ENCODE measurements at regions of chr19 and their contacts with region 1.

Region 1: DNA sequence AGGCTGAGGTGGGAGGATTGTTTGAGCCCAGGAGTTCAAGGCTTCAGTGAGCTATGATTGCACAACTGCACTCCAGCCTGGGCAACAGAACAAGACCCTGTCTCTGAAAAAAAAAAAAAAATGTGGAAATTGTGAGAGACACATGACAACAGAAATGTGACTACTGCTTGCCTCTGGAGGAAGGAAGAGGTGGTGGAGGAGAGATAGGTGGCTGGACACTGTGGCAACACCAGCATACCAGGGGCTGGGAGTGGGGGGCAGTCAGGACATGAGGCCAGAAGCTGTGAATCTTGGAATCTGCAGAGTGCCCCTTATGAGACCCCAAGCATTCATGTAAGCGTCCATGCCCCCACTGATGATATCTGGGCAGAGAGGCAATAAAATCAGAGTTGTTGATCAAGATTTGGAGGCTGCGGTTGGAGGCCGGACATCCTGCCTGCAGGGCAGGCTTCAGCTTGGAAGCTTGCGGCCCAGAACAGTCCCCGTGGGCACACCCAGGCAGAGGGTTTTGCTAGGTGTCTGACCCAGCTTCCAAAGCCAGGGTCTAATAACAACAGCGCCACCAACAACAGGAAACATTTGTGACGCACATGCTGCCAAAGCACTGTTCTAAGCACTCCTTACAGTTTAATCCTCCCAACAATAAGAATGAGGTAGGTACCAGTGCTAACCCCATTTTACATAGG is 16.9 kb downstream of the FAM187B start:
- DNase-seq: peak; percentile 74 to 93 (median 91)
- H3K4me3 ChIP-seq: peak overlapping the region; percentile 36
- H3K4me3 Mint-ChIP-seq: peak overlapping the region; percentile 66 to 89 (median 78)
- H3K27ac ChIP-seq: peak overlapping the region; percentile 86
- H3K27ac Mint-ChIP-seq: peak overlapping the region; percentile 98 to 100 (median 99)
- H3K4me1 ChIP-seq: peaks cover 86% of the 10 kb centered on the region
- H3K4me1 Mint-ChIP-seq: peaks cover 69 to 86% (median 85%) of the 10 kb centered on the region in 3 donors
- H3K27me3 ChIP-seq: no peaks in the 10 kb centered on the region
- H3K27me3 Mint-ChIP-seq: peaks cover 0 to 6% of the 10 kb centered on the region in 2 donors

Region 2: GRCh38 chr19:35154525-35155406 is 56.9 kb before region 1 on chr19 and contains the start of gene FXYD5:
- CTCF ChIA-PET with region 1: interaction called, 8 read pairs
- POLR2A ChIA-PET with region 1: interaction called, 28 read pairs
- DNase-seq: peak; percentile 58 to 77 (median 62)
- H3K4me3 ChIP-seq: peak within 1 kb of the TSS; percentile 92
- H3K4me3 Mint-ChIP-seq: peak within 1 kb of the TSS; percentile 96 to 100 (median 99)
- H3K27ac ChIP-seq: peak within 1 kb of the TSS; percentile 91
- H3K27ac Mint-ChIP-seq: peak within 1 kb of the TSS; percentile 91 to 100 (median 98)
- H3K4me1 ChIP-seq: peaks cover 37% of the 10 kb centered on the region
- H3K4me1 Mint-ChIP-seq: peaks cover 49 to 52% (median 49%) of the 10 kb centered on the region in 3 donors
- H3K27me3 ChIP-seq: no peaks in the 10 kb centered on the region
- H3K27me3 Mint-ChIP-seq: no peaks in the 10 kb centered on the region
- total RNA-seq, gene FXYD5: 295 TPM

Region 3: DNA sequence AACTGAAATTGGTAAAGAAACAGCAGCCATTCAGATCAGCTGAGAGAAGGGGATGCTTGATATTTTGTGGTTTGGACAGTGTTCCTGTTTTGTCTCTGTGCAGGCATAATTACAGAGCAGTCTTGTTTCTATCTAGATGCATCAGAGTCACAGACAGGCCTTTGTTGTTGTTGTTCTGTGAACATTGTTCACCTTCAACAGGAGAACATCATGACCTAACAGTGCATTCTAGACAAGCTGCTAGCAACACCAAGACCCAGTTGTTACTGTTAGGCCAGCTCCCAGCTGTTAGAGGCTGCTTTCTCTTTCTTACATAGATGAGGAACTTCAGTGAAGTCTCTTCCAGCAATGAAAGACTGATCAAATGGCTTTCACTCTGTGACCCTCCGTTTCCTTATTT is 28.6 kb after region 1 on chr19:
- CTCF ChIA-PET with region 1: interaction called, 8 read pairs
- POLR2A ChIA-PET with region 1: interaction called, 16 read pairs
- DNase-seq: peak in 2 of 5 donors; percentile 67 to 70
- H3K4me3 ChIP-seq: no peak overlapping the region
- H3K4me3 Mint-ChIP-seq: peak overlapping the region; percentile 2 to 76 (median 52)
- H3K27ac ChIP-seq: no peak overlapping the region
- H3K27ac Mint-ChIP-seq: peak overlapping the region; percentile 62 to 97 (median 92)
- H3K4me1 ChIP-seq: peaks cover 25% of the 10 kb centered on the region
- H3K4me1 Mint-ChIP-seq: peaks cover 19 to 36% (median 32%) of the 10 kb centered on the region in 3 donors
- H3K27me3 ChIP-seq: no peaks in the 10 kb centered on the region
- H3K27me3 Mint-ChIP-seq: peaks cover 11 to 20% of the 10 kb centered on the region in 2 donors

Region 4: GRCh38 chr19:35269421-35270117 is 57.9 kb after region 1 on chr19:
- CTCF ChIA-PET with region 1: interaction called, 3 read pairs
- POLR2A ChIA-PET with region 1: interaction called, 22 read pairs
- DNase-seq: peak; percentile 57 to 82 (median 67)
- H3K4me3 ChIP-seq: peak overlapping the region; percentile 45
- H3K4me3 Mint-ChIP-seq: peak overlapping the region; percentile 73 to 91 (median 80)
- H3K27ac ChIP-seq: peak overlapping the region; percentile 38
- H3K27ac Mint-ChIP-seq: peak overlapping the region; percentile 24 to 86 (median 76)
- H3K4me1 ChIP-seq: peaks cover 23% of the 10 kb centered on the region
- H3K4me1 Mint-ChIP-seq: peaks cover 35 to 60% (median 44%) of the 10 kb centered on the region in 3 donors
- H3K27me3 ChIP-seq: no peaks in the 10 kb centered on the region
- H3K27me3 Mint-ChIP-seq: peaks cover 0 to 3% of the 10 kb centered on the region in 2 donors

Measured in CD8-positive, alpha-beta memory T cell (primary cell).